Common myeloid progenitor, CD34-positive (primary cell): ENCODE measurements at regions of chr4 and their contacts with region 1.

Region 1: GRCh38 chr4:4260253-4260652 is 12.2 kb upstream of the TMEM128 start:
- DNase-seq: peak; percentile 73 to 84 (median 84)
- H3K4me3 ChIP-seq: no peak overlapping the region
- H3K27ac ChIP-seq: no peak overlapping the region
- H3K4me1 ChIP-seq: no peaks in the 10 kb centered on the region
- H3K27me3 ChIP-seq: peaks cover 0 to 5% (median under 1%) of the 10 kb centered on the region in 5 experiments

Region 2: DNA sequence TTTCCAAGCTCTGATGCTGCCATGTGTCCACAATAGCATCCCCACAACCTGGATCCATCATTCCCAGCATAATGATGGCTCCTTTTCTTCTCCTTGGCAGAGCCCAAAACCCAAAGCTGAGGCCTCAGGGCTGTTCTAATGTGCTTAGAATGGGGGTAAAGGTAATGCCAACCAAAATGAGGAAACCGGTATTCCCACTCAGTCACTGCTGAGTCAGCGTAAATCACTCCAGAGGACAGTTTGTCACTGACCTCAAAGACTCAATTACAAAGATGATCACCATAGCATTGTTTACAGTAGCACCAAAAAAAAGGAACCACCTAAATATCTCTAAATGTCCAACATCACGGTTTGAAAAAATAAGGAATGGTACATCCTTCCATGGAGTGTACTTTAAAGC is 74.7 kb before region 1 on chr4:
- CTCF ChIA-PET with region 1: no interaction called
- POLR2A ChIA-PET with region 1: no interaction called
- DNase-seq: no peak
- H3K4me3 ChIP-seq: no peak overlapping the region
- H3K27ac ChIP-seq: no peak overlapping the region
- H3K4me1 ChIP-seq: no peaks in the 10 kb centered on the region
- H3K27me3 ChIP-seq: peaks cover 0 to 42% (median 13%) of the 10 kb centered on the region in 5 experiments

Region 3: GRCh38 chr4:4248029-4248884 is 12.0 kb before region 1 on chr4 and contains the start of gene TMEM128:
- CTCF ChIA-PET with region 1: interaction called, 14 read pairs
- POLR2A ChIA-PET with region 1: no interaction called
- DNase-seq: peak; percentile 94 to 96 (median 96)
- H3K4me3 ChIP-seq: peak within 1 kb of the TSS; percentile 86 to 99 (median 90)
- H3K27ac ChIP-seq: peak within 1 kb of the TSS; percentile 90 to 97
- H3K4me1 ChIP-seq: peaks cover 8 to 18% (median 12%) of the 10 kb centered on the region in 4 experiments
- H3K27me3 ChIP-seq: peaks cover 2 to 4% (median 3%) of the 10 kb centered on the region in 5 experiments

Region 4: DNA sequence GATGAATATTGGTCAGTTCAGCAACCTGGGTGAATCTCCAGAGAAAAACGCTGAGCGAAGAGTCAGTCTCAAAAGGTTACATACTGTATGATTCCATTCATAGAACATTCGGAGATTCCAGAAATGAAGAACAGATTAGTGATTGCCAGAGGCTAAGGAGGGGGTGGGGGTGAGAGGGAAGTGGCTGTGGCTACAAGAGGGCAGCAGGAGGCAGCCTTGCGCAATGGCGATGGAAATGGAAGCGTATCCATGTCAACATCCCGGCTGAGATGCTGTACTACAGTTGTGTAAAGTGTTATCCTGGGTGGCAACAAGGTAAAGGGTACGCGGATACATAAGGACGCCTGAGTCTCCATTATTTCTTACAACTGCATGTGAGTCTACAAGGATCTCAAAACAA is 11.7 kb after region 1 on chr4:
- CTCF ChIA-PET with region 1: interaction called, 10 read pairs
- POLR2A ChIA-PET with region 1: no interaction called
- DNase-seq: no peak
- H3K4me3 ChIP-seq: no peak overlapping the region
- H3K27ac ChIP-seq: no peak overlapping the region
- H3K4me1 ChIP-seq: peaks cover 0 to 3% (median 0%) of the 10 kb centered on the region in 4 experiments
- H3K27me3 ChIP-seq: no peaks in the 10 kb centered on the region

Region 5: GRCh38 chr4:4334798-4335520 is 74.7 kb after region 1 on chr4:
- CTCF ChIA-PET with region 1: interaction called, 17 read pairs
- POLR2A ChIA-PET with region 1: no interaction called
- DNase-seq: peak; percentile 54 to 66 (median 60)
- H3K4me3 ChIP-seq: no peak overlapping the region
- H3K27ac ChIP-seq: no peak overlapping the region
- H3K4me1 ChIP-seq: peaks cover 0 to 3% (median 1%) of the 10 kb centered on the region in 4 experiments
- H3K27me3 ChIP-seq: peaks cover 0 to 15% (median 5%) of the 10 kb centered on the region in 5 experiments

Region 6: GRCh38 chr4:4430492-4431197 is 170.4 kb after region 1 on chr4:
- CTCF ChIA-PET with region 1: interaction called, 15 read pairs
- POLR2A ChIA-PET with region 1: no interaction called
- DNase-seq: peak; percentile 30 to 50 (median 49)
- H3K4me3 ChIP-seq: no peak overlapping the region
- H3K27ac ChIP-seq: no peak overlapping the region
- H3K4me1 ChIP-seq: no peaks in the 10 kb centered on the region
- H3K27me3 ChIP-seq: no peaks in the 10 kb centered on the region